Activated CD4-positive, alpha-beta memory T cell treated with anti-CD3 and anti-CD28 coated beads for 36 hours (primary cell): ENCODE measurements at regions of chr2 and their contacts with region 1.

Region 1: GRCh38 chr2:39913648-39914461 is 134.8 kb upstream of the THUMPD2 start:
- DNase-seq: no peak
- H3K4me3 Mint-ChIP-seq: no peak overlapping the region
- H3K27ac Mint-ChIP-seq: no peak overlapping the region
- H3K4me1 Mint-ChIP-seq: no peaks in the 10 kb centered on the region
- H3K27me3 Mint-ChIP-seq: peaks cover 4% of the 10 kb centered on the region

Region 2: DNA sequence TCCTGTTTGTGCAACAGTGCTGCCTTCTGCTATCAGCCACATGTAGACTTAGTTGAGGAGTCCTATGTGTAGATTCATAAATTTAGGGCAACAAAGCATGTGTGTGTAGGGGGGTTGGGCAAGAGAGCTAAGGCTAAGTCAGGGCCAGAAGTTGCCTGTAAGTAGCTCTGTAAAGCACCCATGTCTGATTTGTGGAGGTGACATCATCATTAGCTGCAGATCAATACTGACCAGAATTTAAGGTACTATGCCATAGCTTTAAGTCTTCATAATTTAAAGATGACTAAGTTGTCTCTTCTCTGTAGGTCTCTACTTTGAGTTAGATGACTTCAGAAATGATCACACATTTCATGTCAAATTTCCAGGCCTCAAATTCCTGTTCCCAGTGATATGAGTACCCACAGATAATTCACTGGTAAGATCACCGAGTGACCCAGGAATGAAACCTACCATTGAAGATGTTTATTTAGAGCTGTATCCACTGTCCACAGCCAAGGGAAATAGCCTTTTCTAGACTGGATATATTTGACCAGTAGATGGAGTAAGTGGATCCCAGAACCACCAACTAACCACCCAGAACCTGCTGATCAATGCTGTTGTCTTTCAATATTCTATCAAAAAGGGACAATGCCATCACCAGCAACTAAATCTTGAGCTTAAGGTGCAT is 299.1 kb after region 1 on chr2:
- CTCF ChIA-PET with region 1: no interaction called
- POLR2A ChIA-PET with region 1: no interaction called
- intact Hi-C with region 1: loop called (anchors 10 kb)
- DNase-seq: no peak
- H3K4me3 Mint-ChIP-seq: no peak overlapping the region
- H3K27ac Mint-ChIP-seq: no peak overlapping the region
- H3K4me1 Mint-ChIP-seq: peaks cover 1% of the 10 kb centered on the region
- H3K27me3 Mint-ChIP-seq: no peaks in the 10 kb centered on the region

Region 3: DNA sequence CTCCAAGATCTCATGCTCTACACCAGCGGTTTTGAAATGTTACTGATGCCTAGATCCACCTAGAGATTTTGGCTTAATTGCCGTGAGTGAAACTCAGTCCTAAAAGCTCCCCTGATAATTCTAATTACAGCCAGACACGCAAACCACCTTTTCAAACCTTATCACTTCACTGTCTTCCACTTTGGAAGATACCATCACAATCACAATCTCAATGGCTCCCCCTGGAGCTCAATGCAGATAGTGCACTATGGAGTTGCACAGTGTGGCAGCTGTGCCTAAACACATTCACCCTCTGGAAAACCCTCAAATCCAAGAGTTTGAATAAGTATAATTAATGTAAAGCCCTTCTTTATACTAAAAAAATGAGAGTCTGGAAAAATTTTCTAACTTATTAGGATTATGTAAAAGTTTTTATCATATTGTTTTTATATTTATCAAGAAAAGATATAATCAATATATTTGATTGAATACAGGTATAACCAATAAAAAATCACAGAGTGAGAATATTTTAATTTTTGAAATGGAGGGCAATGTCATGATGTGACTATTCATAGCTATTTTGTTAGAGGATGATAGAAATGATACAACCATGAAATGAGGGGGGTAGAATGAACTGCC is 640.9 kb after region 1 on chr2:
- CTCF ChIA-PET with region 1: interaction called, 11 read pairs
- POLR2A ChIA-PET with region 1: no interaction called
- intact Hi-C with region 1: loop called (anchors 1 kb)
- DNase-seq: peak; percentile 47
- H3K4me3 Mint-ChIP-seq: no peak overlapping the region
- H3K27ac Mint-ChIP-seq: no peak overlapping the region
- H3K4me1 Mint-ChIP-seq: no peaks in the 10 kb centered on the region
- H3K27me3 Mint-ChIP-seq: no peaks in the 10 kb centered on the region

Region 4: DNA sequence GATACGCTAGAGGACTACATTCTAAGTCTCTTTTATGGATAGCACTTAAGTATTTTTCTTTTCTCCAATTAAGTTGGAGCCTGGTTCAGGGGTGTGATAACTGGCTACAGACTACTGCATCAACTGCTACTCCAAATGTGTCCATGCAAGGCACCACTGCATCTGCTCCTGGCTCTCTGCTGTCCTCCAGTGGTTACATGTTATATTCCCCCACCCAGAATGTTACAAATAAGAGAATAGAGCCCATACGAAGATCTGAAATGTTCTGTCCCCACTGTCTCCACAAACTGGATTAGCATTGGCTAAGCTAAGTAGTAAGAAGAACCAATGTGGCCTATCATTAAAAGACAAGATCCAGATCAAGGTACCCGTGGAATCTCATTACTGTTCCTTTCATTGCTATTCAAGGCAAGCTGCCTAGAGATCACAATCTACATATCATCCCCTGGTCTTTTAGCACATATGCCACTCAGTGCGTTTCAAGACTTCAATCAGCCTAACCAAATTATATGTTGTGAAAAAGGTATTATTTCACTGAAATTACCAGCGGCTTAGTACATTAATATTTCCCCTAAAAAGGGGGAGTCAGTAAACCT is 846.3 kb after region 1 on chr2:
- CTCF ChIA-PET with region 1: no interaction called
- POLR2A ChIA-PET with region 1: no interaction called
- intact Hi-C with region 1: loop called (anchors 10 kb)
- DNase-seq: no peak
- H3K4me3 Mint-ChIP-seq: no peak overlapping the region
- H3K27ac Mint-ChIP-seq: no peak overlapping the region
- H3K4me1 Mint-ChIP-seq: no peaks in the 10 kb centered on the region
- H3K27me3 Mint-ChIP-seq: no peaks in the 10 kb centered on the region

Region 5: DNA sequence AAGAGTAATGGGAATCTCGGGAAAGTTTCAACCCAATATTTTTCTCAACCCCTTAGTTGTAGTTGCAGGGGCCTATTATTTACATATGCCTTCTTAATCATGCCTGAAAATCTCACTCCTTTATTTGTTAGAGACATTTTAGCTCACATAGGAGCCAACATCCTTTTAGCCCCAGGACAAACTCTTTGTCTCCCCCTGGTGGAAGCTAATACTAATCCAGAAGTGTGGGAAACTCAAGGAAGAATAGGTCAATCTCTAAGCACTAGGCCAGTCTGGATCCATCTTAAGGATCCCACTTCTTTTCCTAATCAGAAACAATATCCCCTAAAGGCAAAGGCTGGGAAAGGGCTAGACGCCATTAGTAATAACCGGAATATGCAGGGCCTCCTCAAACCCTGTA is 1583.1 kb after region 1 on chr2:
- CTCF ChIA-PET with region 1: no interaction called
- POLR2A ChIA-PET with region 1: no interaction called
- intact Hi-C with region 1: loop called (anchors 5 kb)
- DNase-seq: no peak
- H3K4me3 Mint-ChIP-seq: no peak overlapping the region
- H3K27ac Mint-ChIP-seq: no peak overlapping the region
- H3K4me1 Mint-ChIP-seq: no peaks in the 10 kb centered on the region
- H3K27me3 Mint-ChIP-seq: no peaks in the 10 kb centered on the region

Region 6: DNA sequence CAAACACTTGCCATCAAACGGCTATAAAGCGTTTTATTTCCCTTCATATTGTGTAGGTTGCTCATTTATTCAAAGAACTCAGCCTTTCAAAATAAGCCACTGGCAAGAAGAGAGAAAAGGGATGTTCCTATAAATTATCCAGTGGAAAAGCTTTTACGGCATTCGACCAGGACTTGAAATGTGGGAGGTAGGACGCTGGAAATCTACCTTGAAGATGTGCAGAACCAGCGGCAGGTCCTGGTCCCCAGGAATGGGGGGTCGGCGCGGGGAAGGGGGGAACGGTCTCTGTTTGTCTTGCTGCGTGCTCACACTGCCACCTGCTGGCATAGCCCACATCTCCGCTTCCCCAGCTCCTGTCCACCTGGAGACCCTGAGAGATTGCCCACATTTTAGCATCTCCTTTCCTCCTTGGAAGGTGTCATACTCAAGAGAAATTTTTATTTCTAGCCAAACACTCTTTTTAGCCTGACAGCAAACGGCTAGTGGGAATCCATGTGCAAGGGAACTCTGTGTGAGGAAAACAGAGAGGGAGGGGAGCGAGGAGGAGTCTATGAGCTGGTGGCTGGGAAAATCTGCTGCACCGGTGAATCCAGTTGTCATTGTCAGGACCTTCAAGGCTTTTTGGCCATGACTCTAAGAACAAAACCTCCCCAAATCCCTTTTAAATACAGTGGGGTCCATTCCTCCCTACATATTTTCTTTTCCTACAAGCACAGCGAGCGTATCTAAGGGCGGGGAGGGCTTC is 1785.0 kb after region 1 on chr2:
- CTCF ChIA-PET with region 1: interaction called, 22 read pairs
- POLR2A ChIA-PET with region 1: no interaction called
- intact Hi-C with region 1: loop called (anchors 5 kb)
- DNase-seq: peak; percentile 12
- H3K4me3 Mint-ChIP-seq: no peak overlapping the region
- H3K27ac Mint-ChIP-seq: no peak overlapping the region
- H3K4me1 Mint-ChIP-seq: no peaks in the 10 kb centered on the region
- H3K27me3 Mint-ChIP-seq: peaks cover 5% of the 10 kb centered on the region

Region 7: DNA sequence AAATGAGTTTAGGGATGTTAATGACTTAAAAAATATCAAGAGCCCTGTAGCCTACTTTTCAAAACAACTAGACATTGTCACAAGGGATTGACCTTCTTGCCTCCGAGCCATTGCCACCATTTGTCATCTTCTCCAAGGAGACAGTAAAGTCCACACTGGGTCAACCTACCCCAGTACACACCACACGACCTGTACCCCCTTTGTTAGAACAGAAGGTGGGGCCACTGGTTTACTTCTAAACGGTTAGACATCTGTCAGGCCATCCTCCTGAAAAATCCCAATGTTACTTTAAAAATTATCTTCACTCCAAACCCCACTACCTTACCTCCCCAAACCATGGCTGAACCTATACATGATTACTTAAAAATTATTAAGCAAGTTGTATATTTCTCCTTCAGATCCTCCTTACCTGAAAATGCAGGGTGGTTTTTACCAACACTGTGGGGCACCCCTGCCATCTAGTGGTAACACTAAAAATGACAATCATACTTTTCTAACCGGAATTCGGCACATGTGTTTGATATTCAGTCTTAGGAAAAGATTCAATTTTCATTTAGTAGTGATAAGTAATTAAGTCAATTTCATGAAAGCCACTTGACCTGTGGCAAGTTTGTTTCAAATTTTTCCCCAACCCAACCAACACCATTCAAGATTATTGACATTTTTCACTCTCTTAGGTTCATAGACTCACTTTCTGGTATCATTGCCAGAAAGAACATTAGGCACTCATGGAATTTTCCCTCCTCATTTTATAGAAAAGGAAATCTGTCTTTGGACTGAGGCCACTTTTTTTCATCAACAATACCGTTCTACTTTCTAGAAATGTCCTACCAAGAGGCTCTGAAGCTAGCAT is 1868.7 kb after region 1 on chr2:
- CTCF ChIA-PET with region 1: interaction called, 7 read pairs
- POLR2A ChIA-PET with region 1: no interaction called
- intact Hi-C with region 1: loop called (anchors 1 kb)
- DNase-seq: peak; percentile 30
- H3K4me3 Mint-ChIP-seq: no peak overlapping the region
- H3K27ac Mint-ChIP-seq: no peak overlapping the region
- H3K4me1 Mint-ChIP-seq: no peaks in the 10 kb centered on the region
- H3K27me3 Mint-ChIP-seq: peaks cover 1% of the 10 kb centered on the region